ENCODE measurements at regions of chr1 and their contacts with region 1.

Region 1: GRCh38 chr1:6464514-6464836 is 1.5 kb downstream of the TNFRSF25 start:
- DNase-seq: peak; percentile 83
- H3K4me3 Mint-ChIP-seq: peak overlapping the region; percentile 82
- H3K27ac Mint-ChIP-seq: peak overlapping the region; percentile 83
- H3K4me1 Mint-ChIP-seq: peaks cover 54% of the 10 kb centered on the region
- H3K27me3 Mint-ChIP-seq: no peaks in the 10 kb centered on the region

Region 2: DNA sequence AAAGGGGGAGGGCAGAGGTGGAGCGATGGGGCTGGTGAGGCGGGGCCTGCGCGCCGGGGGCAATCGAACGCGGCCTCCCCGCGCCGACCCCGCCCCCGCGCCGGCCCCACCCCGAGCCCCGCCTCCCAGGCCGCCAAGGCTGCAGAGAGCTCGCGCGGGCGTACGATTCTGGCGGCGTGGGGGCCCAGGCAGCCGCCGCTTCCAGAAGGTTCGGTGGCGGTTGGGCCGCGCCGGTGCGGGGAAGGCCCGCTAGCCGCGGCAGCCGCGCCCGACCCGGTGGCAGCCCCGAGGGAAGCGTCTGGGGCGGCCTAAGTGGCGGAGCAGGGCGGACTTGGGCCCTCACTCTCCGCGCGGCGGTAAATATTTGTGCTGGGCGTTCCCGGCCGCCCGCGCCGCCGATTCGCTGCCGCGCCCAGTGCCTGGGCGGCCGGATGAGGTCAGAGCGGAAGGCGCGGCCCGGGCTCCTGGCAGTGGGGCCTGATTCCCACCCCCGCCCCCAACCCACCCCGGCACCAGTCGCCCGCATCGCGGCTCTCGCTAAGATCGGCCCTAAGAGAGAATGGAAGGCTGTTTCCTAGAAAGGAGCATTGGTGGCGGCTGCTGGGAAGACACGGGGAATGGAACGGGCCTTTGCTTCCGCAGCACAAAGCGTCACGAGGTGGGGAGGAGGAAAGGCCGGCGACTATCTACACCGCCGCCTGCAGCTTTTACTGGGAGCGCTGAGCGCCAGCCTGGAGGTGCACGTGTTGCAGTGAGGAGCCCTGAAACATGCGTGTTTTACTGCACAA is 70.9 kb before region 1 on chr1 and contains the start of gene ACOT7:
- CTCF ChIA-PET with region 1: no interaction called
- POLR2A ChIA-PET with region 1: no interaction called
- intact Hi-C with region 1: loop called (anchors 2 kb)
- DNase-seq: peak; percentile 93
- H3K4me3 Mint-ChIP-seq: peak within 1 kb of the TSS; percentile 84
- H3K27ac Mint-ChIP-seq: peak within 1 kb of the TSS; percentile 88
- H3K4me1 Mint-ChIP-seq: peaks cover 20% of the 10 kb centered on the region
- H3K27me3 Mint-ChIP-seq: no peaks in the 10 kb centered on the region
- total RNA-seq, gene ACOT7: 93.8 to 94.6 TPM

Region 3: DNA sequence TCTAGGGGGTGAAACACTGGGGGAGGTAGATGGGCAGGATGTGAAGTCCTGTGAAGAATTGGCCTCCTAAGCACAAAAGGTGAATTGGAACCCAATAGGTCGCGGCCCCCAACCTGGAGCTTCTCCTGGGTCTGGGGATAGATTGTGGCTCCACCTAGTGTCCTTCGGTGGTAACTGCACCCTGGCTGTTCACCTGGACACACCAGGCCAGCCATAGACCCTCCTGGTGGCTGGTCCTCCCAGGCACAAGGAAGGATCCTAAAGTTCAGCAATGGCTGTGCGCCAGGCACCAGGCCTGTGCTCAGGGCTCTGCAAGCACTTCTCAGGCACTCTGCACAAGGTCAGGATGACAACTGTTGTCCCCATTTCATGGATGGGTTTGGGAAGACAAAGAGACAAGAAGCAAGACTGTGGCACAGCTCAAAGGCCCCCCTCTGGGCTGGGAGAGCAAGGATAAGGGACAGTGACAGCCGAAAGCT is 26.4 kb before region 1 on chr1:
- CTCF ChIA-PET with region 1: interaction called, 22 read pairs
- POLR2A ChIA-PET with region 1: interaction called, 4 read pairs
- intact Hi-C with region 1: loop called (anchors 2 kb)
- DNase-seq: peak; percentile 82
- H3K4me3 Mint-ChIP-seq: no peak overlapping the region
- H3K27ac Mint-ChIP-seq: no peak overlapping the region
- H3K4me1 Mint-ChIP-seq: peaks cover 6% of the 10 kb centered on the region
- H3K27me3 Mint-ChIP-seq: peaks cover 19% of the 10 kb centered on the region

Region 4: DNA sequence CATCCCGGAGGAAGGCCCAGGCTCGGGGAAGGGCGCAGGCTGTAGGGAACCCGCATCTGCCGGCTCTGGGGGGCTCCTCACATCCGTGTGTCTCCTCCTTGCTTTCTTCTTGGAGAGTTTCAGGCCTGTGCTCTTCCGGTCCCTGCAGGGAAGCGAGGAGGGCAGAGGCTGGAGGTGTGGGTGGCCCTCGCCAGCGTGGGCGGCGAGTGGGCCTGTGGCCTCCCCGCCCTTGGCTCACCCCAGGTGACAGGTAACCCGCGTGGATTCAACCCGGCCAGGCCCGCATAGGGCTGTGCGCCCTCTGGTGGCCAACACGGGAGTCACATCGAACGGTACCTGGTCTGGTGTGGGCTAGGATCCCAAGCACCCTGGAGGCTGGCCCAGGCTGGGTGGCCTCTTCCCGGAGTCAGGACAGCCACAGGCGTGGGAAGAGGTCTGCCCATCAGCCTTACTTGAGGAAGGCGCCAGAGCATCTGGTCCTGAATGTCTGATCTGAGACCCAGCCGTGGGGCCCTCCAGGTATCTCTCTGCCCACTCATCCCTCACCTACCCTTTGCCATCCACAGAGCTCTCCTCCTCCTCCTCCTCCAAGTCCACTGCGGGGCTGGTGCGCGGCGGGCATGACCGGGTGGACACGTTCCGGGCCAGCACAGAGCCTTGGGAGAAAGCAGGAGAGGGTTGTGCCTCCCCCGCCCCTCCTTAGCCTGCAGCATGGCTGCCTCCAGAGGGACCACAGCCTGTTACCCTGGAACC is 11.1 kb after region 1 on chr1:
- CTCF ChIA-PET with region 1: interaction called, 18 read pairs
- POLR2A ChIA-PET with region 1: no interaction called
- intact Hi-C with region 1: no loop called
- DNase-seq: peak; percentile 82
- H3K4me3 Mint-ChIP-seq: no peak overlapping the region
- H3K27ac Mint-ChIP-seq: no peak overlapping the region
- H3K4me1 Mint-ChIP-seq: peaks cover 6% of the 10 kb centered on the region
- H3K27me3 Mint-ChIP-seq: no peaks in the 10 kb centered on the region

Region 5: GRCh38 chr1:6711174-6711573 is 246.7 kb after region 1 on chr1:
- CTCF ChIA-PET with region 1: no interaction called
- POLR2A ChIA-PET with region 1: no interaction called
- intact Hi-C with region 1: no loop called
- DNase-seq: no peak
- H3K4me3 Mint-ChIP-seq: no peak overlapping the region
- H3K27ac Mint-ChIP-seq: no peak overlapping the region
- H3K4me1 Mint-ChIP-seq: no peaks in the 10 kb centered on the region
- H3K27me3 Mint-ChIP-seq: peaks cover 9% of the 10 kb centered on the region

Region 6: DNA sequence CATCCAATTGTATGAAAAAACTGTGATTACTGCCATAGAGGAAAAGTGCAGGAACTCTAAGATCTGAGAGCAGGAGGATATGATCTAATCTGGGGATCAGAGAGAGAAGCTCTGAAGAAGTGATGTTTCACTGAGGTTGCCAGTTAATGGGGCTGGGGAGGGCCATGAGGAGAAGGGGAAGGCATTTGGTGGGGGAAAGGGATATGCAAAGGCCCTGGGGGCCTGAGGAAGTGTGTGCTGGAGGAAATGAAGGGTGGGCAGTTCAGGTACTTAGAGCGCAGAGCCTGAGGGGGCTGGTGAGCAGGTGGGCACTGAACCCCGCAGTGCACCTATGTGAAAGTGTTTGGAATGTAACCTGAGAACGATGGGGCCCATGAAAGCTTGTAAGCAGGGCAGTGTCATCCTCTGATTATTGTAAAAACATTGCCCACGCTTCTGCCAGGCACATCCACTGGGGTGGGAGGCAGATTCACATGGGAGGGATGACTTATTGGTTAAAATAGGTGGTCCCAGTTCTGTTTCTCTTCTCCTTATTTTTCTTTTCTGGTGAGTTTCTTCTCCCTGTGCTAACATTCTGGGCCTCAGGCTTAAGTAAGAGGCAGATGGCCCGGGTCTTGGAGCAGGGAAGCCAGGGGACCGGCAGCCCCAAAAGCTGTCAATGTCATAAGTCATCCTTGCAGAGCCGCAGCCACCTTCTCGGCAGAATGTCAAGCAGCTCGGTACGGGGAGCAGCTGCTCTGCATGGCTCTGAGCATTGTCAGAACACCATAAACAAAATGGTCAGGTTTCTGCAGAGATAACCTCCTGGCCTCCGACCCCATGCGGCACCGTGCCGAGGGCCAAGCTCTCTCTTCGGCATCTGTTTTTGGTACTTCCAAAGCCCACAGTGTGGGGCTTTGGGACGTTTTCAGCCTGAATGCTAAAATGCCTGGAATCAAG is 814.6 kb after region 1 on chr1:
- CTCF ChIA-PET with region 1: no interaction called
- POLR2A ChIA-PET with region 1: no interaction called
- intact Hi-C with region 1: no loop called
- DNase-seq: no peak
- H3K4me3 Mint-ChIP-seq: no peak overlapping the region
- H3K27ac Mint-ChIP-seq: no peak overlapping the region
- H3K4me1 Mint-ChIP-seq: no peaks in the 10 kb centered on the region
- H3K27me3 Mint-ChIP-seq: peaks cover 16% of the 10 kb centered on the region

Measured in activated CD4-positive, alpha-beta memory T cell treated with anti-CD3 and anti-CD28 coated beads for 36 hours (primary cell).